GM12878 (cell line): ENCODE measurements at regions of chrX and their contacts with region 1.

Region 1: DNA sequence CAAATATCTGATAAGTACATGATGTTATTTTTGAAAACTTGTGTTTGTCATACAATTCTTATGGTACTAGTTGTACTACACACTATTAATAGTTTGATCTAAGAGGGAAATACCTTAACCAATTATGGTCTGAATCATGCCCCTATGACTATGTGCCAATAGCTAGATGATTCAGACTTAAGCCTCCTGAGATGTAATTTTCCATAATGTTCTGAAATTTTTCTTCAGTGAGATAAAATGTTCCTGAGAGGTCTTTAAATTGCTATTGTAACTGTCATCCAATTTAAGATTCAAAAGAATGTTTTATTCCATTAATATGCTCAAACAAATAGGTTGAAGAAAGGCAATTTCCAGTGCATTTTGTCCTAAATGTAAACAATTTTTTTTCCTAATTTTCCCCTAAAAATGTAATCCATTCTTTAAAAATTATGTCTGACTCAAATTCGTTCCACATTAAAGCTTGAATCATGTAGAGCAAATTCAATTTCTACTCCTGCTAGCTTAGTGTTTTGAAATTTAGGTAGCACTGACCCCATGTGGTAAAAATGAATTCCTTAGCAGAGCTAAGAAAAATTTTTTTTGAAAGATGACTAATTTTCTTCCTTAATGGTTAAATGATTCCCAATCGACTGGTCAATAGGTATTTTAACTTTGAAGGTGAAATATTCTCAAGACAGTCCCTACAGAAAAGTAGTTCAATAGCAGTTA is 49.1 kb downstream of the APOOL start:
- DNase-seq: no peak
- ATAC-seq: no peak
- H3K4me3 ChIP-seq: no peak overlapping the region
- H3K27ac ChIP-seq: no peak overlapping the region
- H3K4me1 ChIP-seq: no peaks in the 10 kb centered on the region
- H3K27me3 ChIP-seq: no peaks in the 10 kb centered on the region
- CTCF ChIP-seq: peak; percentile 7 to 44 (median 10); a peak in 3 of 6 replicates
- EP300 ChIP-seq: no peak
- POLR2A ChIP-seq: no peak
- RAD21 ChIP-seq: peak; percentile 50; the same call in 1 of the 2 replicates

Region 2: DNA sequence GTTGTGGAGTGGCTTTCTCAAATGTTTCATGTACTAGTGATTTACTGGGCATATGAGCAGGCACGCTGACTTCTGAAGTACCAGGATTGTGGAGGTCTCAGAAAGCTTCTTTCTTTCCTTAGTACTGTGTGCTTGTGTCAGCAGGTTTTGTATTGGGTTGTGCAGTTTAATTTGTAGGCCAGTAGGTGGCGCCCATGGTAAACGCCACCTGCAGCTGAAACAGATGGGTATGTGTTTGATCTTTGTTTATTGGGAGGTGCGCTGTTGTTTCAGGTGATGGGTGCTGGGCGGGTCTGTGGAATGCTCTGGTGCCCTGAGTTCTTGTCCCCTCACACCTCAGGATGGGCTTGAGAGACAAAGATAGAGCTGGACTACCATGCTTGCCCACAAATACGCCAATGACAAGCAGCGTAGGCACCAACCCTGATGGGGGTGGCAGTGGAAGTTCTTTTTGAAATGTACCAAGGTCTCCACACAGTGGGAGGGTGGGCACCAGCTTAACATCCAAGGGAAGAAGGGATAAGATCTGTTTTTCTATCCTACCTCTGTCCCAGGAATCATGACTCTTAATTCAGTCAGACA is 1006.3 kb before region 1 on chrX:
- CTCF ChIA-PET with region 1: interaction called, 7 read pairs
- POLR2A ChIA-PET with region 1: no interaction called
- RAD21 ChIA-PET with region 1: no interaction called
- SMC1A ChIA-PET with region 1: no interaction called
- in situ Hi-C with region 1: no loop called
- intact Hi-C with region 1: loop called (anchors 5 kb)
- DNase-seq: no peak
- ATAC-seq: peak; percentile 91
- H3K4me3 ChIP-seq: no peak overlapping the region
- H3K27ac ChIP-seq: no peak overlapping the region
- H3K4me1 ChIP-seq: no peaks in the 10 kb centered on the region
- H3K27me3 ChIP-seq: no peaks in the 10 kb centered on the region
- CTCF ChIP-seq: peak; percentile 67 to 82 (median 74)
- EP300 ChIP-seq: no peak
- POLR2A ChIP-seq: no peak
- RAD21 ChIP-seq: peak; percentile 73

Region 3: DNA sequence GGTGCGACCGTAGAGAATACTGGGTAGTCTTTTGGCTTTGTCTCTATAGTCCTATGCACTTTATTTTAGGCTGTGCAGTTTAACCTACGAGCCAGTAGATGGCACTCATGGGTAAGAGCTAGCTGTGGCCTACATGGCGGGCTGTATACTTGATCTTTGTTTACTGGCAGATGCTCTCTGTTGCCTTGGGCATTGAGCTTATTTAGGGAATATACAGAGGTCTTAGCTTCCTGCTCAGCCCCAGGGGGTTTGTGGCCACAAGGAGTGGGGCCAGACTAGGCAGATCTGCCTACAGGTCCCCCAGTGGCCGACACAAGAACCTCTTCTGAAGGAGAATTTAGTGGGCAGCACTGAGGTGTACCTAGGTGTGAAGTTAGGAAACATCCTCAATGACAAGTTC is 323.0 kb before region 1 on chrX:
- CTCF ChIA-PET with region 1: interaction called, 15 read pairs
- POLR2A ChIA-PET with region 1: no interaction called
- RAD21 ChIA-PET with region 1: interaction called, 6 read pairs
- SMC1A ChIA-PET with region 1: interaction called, 9 read pairs
- in situ Hi-C with region 1: no loop called
- intact Hi-C with region 1: loop called (anchors 1 kb)
- DNase-seq: peak; percentile 5
- ATAC-seq: peak; percentile 99
- H3K4me3 ChIP-seq: no peak overlapping the region
- H3K27ac ChIP-seq: no peak overlapping the region
- H3K4me1 ChIP-seq: no peaks in the 10 kb centered on the region
- H3K27me3 ChIP-seq: no peaks in the 10 kb centered on the region
- CTCF ChIP-seq: peak; percentile 84 to 86 (median 86)
- EP300 ChIP-seq: no peak
- POLR2A ChIP-seq: no peak
- RAD21 ChIP-seq: peak; percentile 76

Region 4: GRCh38 chrX:85012098-85012497 is 40.7 kb before region 1 on chrX:
- CTCF ChIA-PET with region 1: no interaction called
- POLR2A ChIA-PET with region 1: no interaction called
- RAD21 ChIA-PET with region 1: no interaction called
- SMC1A ChIA-PET with region 1: no interaction called
- in situ Hi-C with region 1: no loop called
- intact Hi-C with region 1: no loop called
- DNase-seq: no peak
- ATAC-seq: no peak
- H3K4me3 ChIP-seq: no peak overlapping the region
- H3K27ac ChIP-seq: no peak overlapping the region
- H3K4me1 ChIP-seq: no peaks in the 10 kb centered on the region
- H3K27me3 ChIP-seq: no peaks in the 10 kb centered on the region
- CTCF ChIP-seq: no peak
- EP300 ChIP-seq: no peak
- POLR2A ChIP-seq: no peak
- RAD21 ChIP-seq: no peak

Region 5: DNA sequence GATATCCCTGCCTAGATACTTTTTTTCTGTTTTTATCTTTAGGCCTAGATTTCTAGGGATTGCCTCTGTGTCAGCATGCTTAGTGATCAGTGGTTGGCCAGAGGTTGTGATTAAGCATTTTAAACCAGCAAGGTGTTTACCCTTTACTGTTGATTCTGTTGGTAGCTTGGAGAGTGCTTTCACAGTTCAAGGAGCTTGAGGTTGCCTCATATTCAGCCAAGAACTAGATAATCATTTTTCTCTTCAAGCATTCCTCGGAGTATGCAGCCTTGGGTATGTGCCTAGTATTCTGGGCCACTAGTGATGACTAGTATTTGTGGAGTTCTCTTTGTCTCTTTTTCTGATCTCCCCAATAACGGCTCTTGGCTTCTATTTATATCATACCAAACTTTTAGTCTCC is 28.7 kb before region 1 on chrX:
- CTCF ChIA-PET with region 1: no interaction called
- POLR2A ChIA-PET with region 1: no interaction called
- RAD21 ChIA-PET with region 1: no interaction called
- SMC1A ChIA-PET with region 1: no interaction called
- in situ Hi-C with region 1: no loop called
- intact Hi-C with region 1: no loop called
- DNase-seq: no peak
- ATAC-seq: no peak
- H3K4me3 ChIP-seq: no peak overlapping the region
- H3K27ac ChIP-seq: no peak overlapping the region
- H3K4me1 ChIP-seq: no peaks in the 10 kb centered on the region
- H3K27me3 ChIP-seq: no peaks in the 10 kb centered on the region
- CTCF ChIP-seq: no peak
- EP300 ChIP-seq: no peak
- POLR2A ChIP-seq: no peak
- RAD21 ChIP-seq: no peak